ENCODE measurements at regions of chr7 and their contacts with region 1.

Region 1: GRCh38 chr7:44460325-44460724 is 30.1 kb downstream of the NUDCD3 start:
- DNase-seq: no peak
- H3K4me3 ChIP-seq: no peak overlapping the region
- H3K27ac ChIP-seq: no peak overlapping the region
- H3K4me1 ChIP-seq: peaks cover 1% of the 10 kb centered on the region
- H3K27me3 ChIP-seq: no peaks in the 10 kb centered on the region
- CTCF ChIP-seq: no peak
- EP300 ChIP-seq: no peak
- POLR2A ChIP-seq: no peak

Region 2: GRCh38 chr7:44434201-44434600 is 26.1 kb before region 1 on chr7:
- intact Hi-C with region 1: loop called in 1 of 4 experiments (anchors 1 kb)
- DNase-seq: no peak
- H3K4me3 ChIP-seq: no peak overlapping the region
- H3K27ac ChIP-seq: no peak overlapping the region
- H3K4me1 ChIP-seq: no peaks in the 10 kb centered on the region
- H3K27me3 ChIP-seq: no peaks in the 10 kb centered on the region
- CTCF ChIP-seq: no peak
- EP300 ChIP-seq: no peak
- POLR2A ChIP-seq: no peak